ENCODE measurements at regions of chr14 and their contacts with region 1.

Region 1: DNA sequence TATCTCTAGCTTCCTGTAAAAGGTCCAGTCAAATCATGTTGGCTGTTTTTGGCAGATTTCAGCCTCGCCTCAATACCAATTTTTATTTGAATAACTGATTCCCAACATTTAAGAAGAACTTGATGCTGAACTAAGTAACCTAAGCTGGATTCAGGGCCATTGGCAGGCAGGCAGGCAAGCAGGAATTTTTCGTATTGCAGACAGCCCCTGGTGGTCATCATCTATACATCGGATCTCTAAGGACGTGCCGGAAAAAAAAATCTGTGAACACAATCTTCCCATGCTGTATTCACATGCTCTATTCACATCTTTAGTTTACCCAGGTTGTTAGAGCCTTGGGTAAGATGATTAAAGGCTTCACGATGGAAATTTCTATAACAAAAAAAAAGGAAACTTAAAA is 7.0 kb downstream of the VCPKMT start:
- DNase-seq: no peak
- ATAC-seq: 0 out of 2 replicates have a peak, but pooled peaks have one; percentile 11
- H3K4me3 Mint-ChIP-seq: no peak overlapping the region
- H3K27ac Mint-ChIP-seq: no peak overlapping the region
- H3K4me1 Mint-ChIP-seq: peaks cover 24% of the 10 kb centered on the region
- H3K27me3 Mint-ChIP-seq: no peaks in the 10 kb centered on the region
- CTCF ChIP-seq: no peak

Region 2: GRCh38 chr14:49852301-49853157 is 256.8 kb before region 1 on chr14 and contains the start of gene NEMF:
- CTCF ChIA-PET with region 1: interaction called, 13 read pairs
- POLR2A ChIA-PET with region 1: no interaction called
- DNase-seq: peak; percentile 82
- ATAC-seq: peak; percentile 72
- H3K4me3 Mint-ChIP-seq: peak within 1 kb of the TSS; percentile 95
- H3K27ac Mint-ChIP-seq: peak within 1 kb of the TSS; percentile 95
- H3K4me1 Mint-ChIP-seq: peaks cover 10% of the 10 kb centered on the region
- H3K27me3 Mint-ChIP-seq: no peaks in the 10 kb centered on the region
- CTCF ChIP-seq: no peak
- total RNA-seq, gene NEMF: 50.1 to 51.2 TPM (median 50.1 TPM) in 3 replicates